ENCODE measurements at regions of chr10 and their contacts with region 1.

Region 1: GRCh38 chr10:43461950-43462349 is 25.0 kb downstream of the ZNF487 start:
- DNase-seq: peak; percentile 69
- ATAC-seq: peak; percentile 86
- H3K4me3 ChIP-seq: no peak overlapping the region
- H3K27ac ChIP-seq: no peak overlapping the region
- H3K4me1 ChIP-seq: no peaks in the 10 kb centered on the region
- H3K27me3 ChIP-seq: no peaks in the 10 kb centered on the region
- CTCF ChIP-seq: peak; percentile 85

Region 2: GRCh38 chr10:42962110-42962901 is 499.6 kb before region 1 on chr10:
- CTCF ChIA-PET with region 1: no interaction called
- POLR2A ChIA-PET with region 1: no interaction called
- in situ Hi-C with region 1: no loop called
- intact Hi-C with region 1: no loop called
- DNase-seq: no peak
- ATAC-seq: 0 out of 2 replicates have a peak, but pooled peaks have one; percentile 4
- H3K4me3 ChIP-seq: no peak overlapping the region
- H3K27ac ChIP-seq: no peak overlapping the region
- H3K4me1 ChIP-seq: peaks cover 12% of the 10 kb centered on the region
- H3K27me3 ChIP-seq: no peaks in the 10 kb centered on the region
- CTCF ChIP-seq: no peak

Region 3: DNA sequence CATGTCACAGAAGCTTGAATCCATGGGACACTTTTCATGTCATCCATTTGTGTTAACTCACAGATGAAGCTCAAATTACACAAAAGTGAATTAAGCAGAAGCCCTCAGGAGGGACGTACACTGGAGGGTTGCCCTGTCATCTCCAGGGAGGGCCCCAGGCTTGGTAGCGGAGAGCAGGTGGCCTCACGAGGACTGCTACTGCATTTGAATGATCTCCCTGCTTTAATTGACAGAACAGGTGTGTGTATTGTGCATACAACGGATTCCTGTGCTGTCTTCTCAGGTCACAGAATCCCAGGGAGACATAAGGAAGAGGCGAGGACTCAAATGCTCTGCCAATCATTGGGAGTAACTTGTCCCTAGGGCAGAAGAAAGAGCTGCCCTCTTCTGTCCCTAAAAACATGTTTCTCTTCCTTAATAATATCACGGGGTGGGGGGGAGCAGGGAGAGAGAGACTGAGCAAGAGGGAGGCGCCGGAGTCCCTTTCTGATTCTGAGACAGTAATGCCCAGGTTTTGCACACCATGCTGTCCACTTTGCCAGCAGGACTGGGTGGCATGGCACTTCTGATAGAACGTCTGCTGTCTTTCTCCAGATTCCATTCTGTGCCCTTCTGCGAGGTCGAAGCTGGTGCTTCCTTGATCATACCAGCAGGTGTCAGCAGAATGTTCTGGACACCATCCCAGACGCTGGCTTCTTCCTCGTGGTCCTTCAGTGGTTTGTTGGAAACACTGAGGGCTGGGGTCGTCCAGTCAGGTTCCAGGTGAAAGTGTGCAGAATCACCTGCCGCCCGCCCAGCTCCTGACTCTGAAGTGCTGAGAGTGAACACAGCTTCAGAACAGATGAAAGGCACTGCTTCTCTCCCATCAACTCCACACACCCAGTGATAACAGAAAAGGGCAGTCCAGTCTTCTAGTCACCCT is 168.9 kb before region 1 on chr10:
- CTCF ChIA-PET with region 1: no interaction called
- POLR2A ChIA-PET with region 1: no interaction called
- in situ Hi-C with region 1: no loop called
- intact Hi-C with region 1: loop called (anchors 5 kb)
- DNase-seq: peak; percentile 39
- ATAC-seq: peak; percentile 93
- H3K4me3 ChIP-seq: 0 out of 4 replicates have a peak overlapping the region, but pooled peaks of 1 of the 2 experiments have one; percentile 16
- H3K27ac ChIP-seq: no peak overlapping the region
- H3K4me1 ChIP-seq: peaks cover 11% of the 10 kb centered on the region
- H3K27me3 ChIP-seq: no peaks in the 10 kb centered on the region
- CTCF ChIP-seq: peak; percentile 93

Region 4: GRCh38 chr10:43436400-43437140 is 25.4 kb before region 1 on chr10 and contains the start of gene ZNF487:
- CTCF ChIA-PET with region 1: no interaction called
- POLR2A ChIA-PET with region 1: interaction called, 12 read pairs
- in situ Hi-C with region 1: no loop called
- intact Hi-C with region 1: no loop called
- DNase-seq: peak; percentile 50
- ATAC-seq: peak; percentile 97
- H3K4me3 ChIP-seq: peak within 1 kb of the TSS; percentile 56 to 83
- H3K27ac ChIP-seq: peak within 1 kb of the TSS; percentile 78
- H3K4me1 ChIP-seq: 0 out of 2 replicates have a peak, but pooled peaks cover 3% of the 10 kb centered on the region
- H3K27me3 ChIP-seq: no peaks in the 10 kb centered on the region
- CTCF ChIP-seq: no peak
- total RNA-seq, gene ZNF487: 7.6 TPM

Region 5: GRCh38 chr10:43491855-43492254 is 29.9 kb after region 1 on chr10:
- CTCF ChIA-PET with region 1: interaction called, 17 read pairs
- POLR2A ChIA-PET with region 1: no interaction called
- in situ Hi-C with region 1: no loop called
- intact Hi-C with region 1: no loop called
- DNase-seq: no peak
- ATAC-seq: no peak
- H3K4me3 ChIP-seq: no peak overlapping the region
- H3K27ac ChIP-seq: no peak overlapping the region
- H3K4me1 ChIP-seq: no peaks in the 10 kb centered on the region
- H3K27me3 ChIP-seq: no peaks in the 10 kb centered on the region
- CTCF ChIP-seq: no peak

Region 6: DNA sequence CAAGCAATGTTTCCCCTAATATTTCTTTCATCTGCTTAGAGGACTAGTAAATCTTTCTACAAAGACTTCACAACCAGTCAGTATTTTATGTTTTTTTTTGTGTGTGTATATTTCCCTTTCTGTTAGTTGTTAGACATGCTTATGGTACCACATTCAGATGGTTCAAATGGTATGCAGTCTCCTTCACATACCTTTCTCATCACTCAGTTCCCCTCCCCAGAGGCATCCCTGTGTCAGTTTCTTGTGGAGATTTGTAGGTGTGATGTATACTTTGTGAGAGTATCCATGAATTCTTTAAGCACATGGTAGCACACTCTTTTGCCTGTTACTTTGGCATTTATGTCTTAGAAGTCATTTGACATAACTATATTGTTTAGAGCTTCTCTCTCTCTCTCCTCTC is 148.7 kb after region 1 on chr10:
- CTCF ChIA-PET with region 1: no interaction called
- POLR2A ChIA-PET with region 1: no interaction called
- in situ Hi-C with region 1: no loop called
- intact Hi-C with region 1: no loop called
- DNase-seq: no peak
- ATAC-seq: no peak
- H3K4me3 ChIP-seq: no peak overlapping the region
- H3K27ac ChIP-seq: no peak overlapping the region
- H3K4me1 ChIP-seq: 0 out of 2 replicates have a peak, but pooled peaks cover 3% of the 10 kb centered on the region
- H3K27me3 ChIP-seq: no peaks in the 10 kb centered on the region
- CTCF ChIP-seq: no peak